Sigmoid colon (tissue), 7 donors: ENCODE measurements at regions of chr11 and their contacts with region 1.

Region 1: GRCh38 chr11:125592305-125593112 is at the start of gene STT3A:
- DNase-seq: peak; percentile 100
- H3K4me3 ChIP-seq: peak within 1 kb of the TSS; percentile 71 to 96 (median 78)
- H3K27ac ChIP-seq: peak within 1 kb of the TSS; percentile 96 to 98 (median 98)
- H3K4me1 ChIP-seq: peaks cover 0 to 33% (median 22%) of the 10 kb centered on the region in 4 donors
- H3K27me3 ChIP-seq: no peaks in the 10 kb centered on the region
- CTCF ChIP-seq: no peak
- EP300 ChIP-seq: no peak
- POLR2A ChIP-seq: peak; percentile 85 to 89
- total RNA-seq, gene STT3A: 34.8 to 60.3 (median 52.9) TPM

Region 2: DNA sequence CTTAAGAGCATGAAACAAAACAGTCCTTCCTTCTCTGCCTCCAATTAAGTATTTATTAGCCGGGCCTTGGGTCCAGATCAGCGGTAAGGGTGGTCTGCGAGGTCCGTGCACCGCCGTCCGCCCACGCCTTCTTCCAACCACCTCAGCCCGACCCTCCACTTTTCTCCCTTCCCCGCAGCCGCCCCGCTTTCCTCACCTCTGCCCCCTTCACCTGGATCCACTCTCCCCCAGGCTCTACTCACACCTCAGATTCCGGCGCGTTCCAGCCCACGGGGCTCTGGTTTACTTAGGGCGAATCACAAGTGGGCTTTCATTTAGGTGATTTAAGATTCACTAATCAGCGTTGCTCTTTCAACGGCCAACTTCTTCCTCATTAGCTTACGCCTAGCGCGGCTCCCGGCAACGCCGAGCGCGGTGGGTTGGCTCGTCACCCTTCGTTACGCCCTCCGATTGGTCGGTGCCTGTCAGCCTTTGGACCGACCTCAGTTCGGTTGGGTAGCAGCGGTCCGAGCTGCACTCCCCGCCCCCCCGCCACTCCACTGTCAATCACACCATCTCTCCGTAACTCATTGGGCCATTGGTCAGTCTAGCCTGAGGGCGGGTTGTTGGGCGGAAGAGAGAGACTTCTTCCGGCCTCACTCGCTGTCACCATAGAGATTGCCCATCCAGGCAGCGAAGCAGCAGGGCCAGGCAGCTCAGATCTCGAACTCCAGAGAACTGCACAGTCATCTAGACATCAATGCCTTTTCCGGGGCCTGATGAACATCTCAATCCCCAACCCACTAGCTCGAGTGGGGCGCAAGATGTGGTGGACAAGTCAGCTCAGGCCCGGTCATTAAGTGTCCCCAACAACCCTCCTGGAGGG is 480.9 kb before region 1 on chr11 and contains the start of gene TMEM218:
- intact Hi-C with region 1: loop called (anchors 5 kb)
- DNase-seq: peak; percentile 100
- H3K4me3 ChIP-seq: peak within 1 kb of the TSS; percentile 60 to 74 (median 70)
- H3K27ac ChIP-seq: peak within 1 kb of the TSS; percentile 82 to 86 (median 84)
- H3K4me1 ChIP-seq: peaks cover 0 to 9% (median 9%) of the 10 kb centered on the region in 4 donors
- H3K27me3 ChIP-seq: no peaks in the 10 kb centered on the region
- CTCF ChIP-seq: no peak
- EP300 ChIP-seq: no peak
- POLR2A ChIP-seq: no peak
- total RNA-seq, gene TMEM218: 14.0 to 34.6 (median 26.0) TPM

Region 3: GRCh38 chr11:125345421-125346178 is 246.9 kb before region 1 on chr11:
- intact Hi-C with region 1: loop called (anchors 10 kb)
- DNase-seq: peak; percentile 92
- H3K4me3 ChIP-seq: no peak overlapping the region
- H3K27ac ChIP-seq: peak overlapping the region; percentile 59 to 65 (median 60)
- H3K4me1 ChIP-seq: peaks cover 0 to 22% (median 19%) of the 10 kb centered on the region in 4 donors
- H3K27me3 ChIP-seq: no peaks in the 10 kb centered on the region
- CTCF ChIP-seq: peak; percentile 71 to 96 (median 84)
- EP300 ChIP-seq: no peak
- POLR2A ChIP-seq: no peak

Region 4: GRCh38 chr11:125494974-125495725 is 97.4 kb before region 1 on chr11:
- intact Hi-C with region 1: loop called (anchors 1 kb)
- DNase-seq: peak; percentile 77
- H3K4me3 ChIP-seq: peak overlapping the region; percentile 58 to 84 (median 70)
- H3K27ac ChIP-seq: peak overlapping the region; percentile 83 to 90 (median 86)
- H3K4me1 ChIP-seq: peaks cover 0 to 13% (median 12%) of the 10 kb centered on the region in 4 donors
- H3K27me3 ChIP-seq: no peaks in the 10 kb centered on the region
- CTCF ChIP-seq: no peak
- EP300 ChIP-seq: no peak
- POLR2A ChIP-seq: no peak

Region 5: GRCh38 chr11:125625630-125626287 is 33.2 kb after region 1 on chr11:
- intact Hi-C with region 1: loop called (anchors 2 kb)
- DNase-seq: peak; percentile 92
- H3K4me3 ChIP-seq: peak overlapping the region; percentile 64 to 69 (median 67)
- H3K27ac ChIP-seq: peak overlapping the region; percentile 86 to 96 (median 94)
- H3K4me1 ChIP-seq: peaks cover 0 to 45% (median 21%) of the 10 kb centered on the region in 4 donors
- H3K27me3 ChIP-seq: no peaks in the 10 kb centered on the region
- CTCF ChIP-seq: no peak
- EP300 ChIP-seq: no peak
- POLR2A ChIP-seq: peak; percentile 29 to 61

Region 6: GRCh38 chr11:126268708-126269579 is 676.4 kb after region 1 on chr11 and contains the starts of genes FOXRED1 and SRPRA:
- intact Hi-C with region 1: loop called (anchors 10 kb)
- DNase-seq: peak; percentile 100
- H3K4me3 ChIP-seq: peak within 1 kb of the TSS; percentile 74 to 91 (median 80)
- H3K27ac ChIP-seq: peak within 1 kb of the TSS; percentile 82 to 92 (median 90)
- H3K4me1 ChIP-seq: peaks cover 0 to 24% (median 16%) of the 10 kb centered on the region in 4 donors
- H3K27me3 ChIP-seq: no peaks in the 10 kb centered on the region
- CTCF ChIP-seq: no peak
- EP300 ChIP-seq: peak in 2 of 4 donors; percentile 75 to 79
- POLR2A ChIP-seq: peak; percentile 70 to 75
- total RNA-seq, gene FOXRED1: 14.5 to 46.0 (median 15.3) TPM
- total RNA-seq, gene SRPRA: 51.0 to 66.5 (median 57.2) TPM